Activated T-helper 2 cell treated with anti-CD3 and anti-CD28 coated beads, Interferon-gamma antibody, Interleukin-2, Interleukin-4, amounts not matched to agents 10 μg/mL and 5 μg/mL and 100 μg/mL, durations not matched to agents 14 hours and 24 hours and 36 hours (primary cell): ENCODE measurements at regions of chr3 and their contacts with region 1.

Region 1: DNA sequence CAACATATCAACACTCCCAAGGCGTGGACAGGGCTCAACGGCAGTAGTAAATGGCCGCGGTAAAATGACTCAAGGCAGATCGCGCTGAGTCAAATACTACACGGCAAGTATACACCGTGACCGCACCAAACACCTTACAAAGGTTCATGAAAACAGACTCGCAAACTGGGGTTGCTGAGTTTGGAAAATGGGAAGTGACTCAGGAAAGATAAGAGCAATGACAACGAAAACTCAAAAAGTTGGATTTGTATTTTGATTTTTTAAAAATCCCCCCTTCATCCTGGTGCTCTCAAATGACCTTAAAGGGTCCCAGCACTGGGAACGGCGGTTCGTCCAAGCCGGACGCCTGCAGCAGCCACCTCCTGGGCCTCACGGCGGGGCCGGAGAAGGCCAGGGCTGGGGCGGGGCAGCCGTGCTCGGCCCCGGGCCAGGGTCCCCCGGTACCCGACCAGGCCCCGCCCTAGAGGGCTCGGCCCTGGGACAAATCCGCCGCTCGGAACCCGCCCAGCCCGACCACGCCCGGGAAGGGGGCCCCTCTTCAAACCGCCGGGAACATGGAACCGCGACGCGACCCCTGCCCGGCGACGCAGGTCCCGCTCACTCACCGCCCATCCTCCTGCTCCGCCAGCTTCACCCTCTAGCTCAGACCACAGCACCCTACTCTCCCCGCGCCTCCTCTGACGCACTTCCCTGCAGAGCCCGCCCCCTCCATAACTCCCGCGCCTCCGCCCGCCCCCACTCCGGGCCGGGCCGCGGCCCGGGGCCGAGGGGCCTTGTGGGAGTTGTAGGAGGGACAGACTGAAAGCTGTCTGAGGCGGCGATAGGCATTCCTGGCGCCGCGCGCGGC is at the start of gene CLDND1:
- DNase-seq: peak; percentile 94
- H3K4me3 Mint-ChIP-seq: peak within 1 kb of the TSS; percentile 92
- H3K27ac Mint-ChIP-seq: peak within 1 kb of the TSS; percentile 95
- H3K4me1 Mint-ChIP-seq: peaks cover 65% of the 10 kb centered on the region
- H3K27me3 Mint-ChIP-seq: no peaks in the 10 kb centered on the region
- total RNA-seq, gene CLDND1: 326 and 338 TPM in 2 replicates

Region 2: GRCh38 chr3:97764407-97765238 is 757.8 kb before region 1 on chr3 and contains the start of gene ARL6:
- intact Hi-C with region 1: loop called (anchors 10 kb)
- DNase-seq: peak; percentile 69
- H3K4me3 Mint-ChIP-seq: peak within 1 kb of the TSS; percentile 89
- H3K27ac Mint-ChIP-seq: peak within 1 kb of the TSS; percentile 82
- H3K4me1 Mint-ChIP-seq: peaks cover 19% of the 10 kb centered on the region
- H3K27me3 Mint-ChIP-seq: peaks cover 3% of the 10 kb centered on the region
- total RNA-seq, gene ARL6: 3.2 and 3.9 TPM in 2 replicates

Region 3: DNA sequence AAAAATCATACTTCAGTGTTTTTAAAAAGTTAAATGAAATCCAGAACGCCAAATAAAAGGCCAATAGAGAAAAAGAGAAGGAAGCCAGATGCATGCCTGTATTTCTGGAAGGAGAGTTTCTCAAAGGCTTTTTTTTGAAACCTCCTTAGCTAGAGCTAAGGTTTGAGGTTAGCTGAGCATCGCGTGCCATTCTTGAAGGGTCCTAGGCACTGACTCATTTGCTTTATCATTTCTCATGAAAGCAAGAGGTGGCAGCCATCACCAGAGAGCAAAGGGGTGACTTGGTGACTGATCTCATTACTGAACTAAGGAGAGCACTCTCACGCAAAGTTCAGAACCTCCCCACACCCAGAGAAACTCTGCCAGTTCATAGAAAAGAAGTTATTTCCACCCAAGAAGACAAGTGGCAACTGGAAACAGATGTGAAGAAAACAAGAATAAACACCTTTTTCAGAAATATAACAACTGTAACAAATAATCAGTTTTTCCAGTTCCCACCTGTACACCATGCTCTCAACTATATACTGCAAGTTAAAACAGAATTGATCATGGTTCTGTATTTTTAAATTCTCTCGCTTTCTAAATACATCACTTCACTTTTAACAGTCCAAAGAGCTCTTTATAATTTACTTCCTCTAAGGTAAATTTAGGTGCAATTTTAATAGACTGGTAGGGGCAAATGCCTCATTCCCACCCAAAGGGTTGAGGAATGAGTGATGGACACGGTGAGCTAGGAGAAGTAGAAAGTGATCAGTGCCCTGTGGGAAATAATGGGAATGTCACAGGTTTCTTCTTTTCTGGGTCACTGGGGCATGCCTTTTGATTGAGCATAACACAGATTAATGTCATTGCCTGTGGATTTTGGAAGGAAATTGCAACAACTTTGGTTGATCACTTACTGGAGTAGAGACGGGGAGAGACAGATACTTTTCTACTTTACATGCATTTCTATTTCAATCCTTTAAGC is 34.0 kb after region 1 on chr3:
- intact Hi-C with region 1: loop called (anchors 1 kb)
- DNase-seq: peak; percentile 84
- H3K4me3 Mint-ChIP-seq: peak overlapping the region; percentile 77
- H3K27ac Mint-ChIP-seq: peak overlapping the region; percentile 93
- H3K4me1 Mint-ChIP-seq: peaks cover 75% of the 10 kb centered on the region
- H3K27me3 Mint-ChIP-seq: no peaks in the 10 kb centered on the region

Region 4: DNA sequence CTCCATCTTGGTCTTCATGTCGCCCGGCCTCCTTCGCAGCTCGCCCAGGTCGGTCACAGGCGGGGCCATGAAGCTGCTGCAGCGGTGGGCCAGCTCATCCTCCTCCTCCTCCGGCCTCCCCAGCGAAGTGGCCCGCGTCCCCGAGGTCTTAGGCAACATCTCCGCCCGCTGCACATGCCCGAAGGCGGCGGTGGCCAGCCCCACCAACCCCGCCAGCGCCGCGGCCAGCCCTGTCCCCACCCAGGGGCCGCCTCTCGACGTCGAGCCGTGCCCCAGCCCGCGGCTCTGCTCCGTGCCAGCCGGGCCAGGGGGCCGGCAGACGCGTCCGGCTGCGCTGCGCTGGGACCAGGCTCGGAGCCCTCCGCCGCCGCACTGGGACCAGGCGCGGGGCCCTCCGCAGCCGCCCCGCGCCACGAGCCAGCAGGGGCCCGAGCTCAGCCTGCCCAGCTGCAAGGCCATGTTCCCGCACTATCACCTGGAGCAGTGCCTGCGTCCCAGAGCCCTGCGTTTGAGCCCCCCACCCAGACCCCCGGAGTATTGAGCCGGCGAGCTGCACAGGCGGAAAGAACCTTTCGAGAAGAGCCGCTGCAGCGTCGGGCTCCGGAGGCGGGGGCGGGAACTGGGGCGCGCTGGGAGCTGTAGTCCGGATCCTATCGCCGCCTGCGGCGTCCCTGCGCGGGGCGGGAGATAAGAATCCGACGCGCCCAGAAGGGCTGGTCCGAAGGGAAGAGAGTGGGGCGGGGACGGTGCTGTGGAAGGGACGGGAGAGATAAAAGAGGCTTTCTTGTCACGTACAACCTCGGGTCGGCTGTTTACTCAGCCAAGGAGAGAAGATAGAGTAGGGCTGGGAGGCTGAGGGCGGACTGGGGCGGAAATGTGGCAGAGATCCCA is 70.8 kb after region 1 on chr3 and contains the start of gene CPOX:
- intact Hi-C with region 1: loop called (anchors 1 kb)
- DNase-seq: peak; percentile 87
- H3K4me3 Mint-ChIP-seq: peak within 1 kb of the TSS; percentile 92
- H3K27ac Mint-ChIP-seq: peak within 1 kb of the TSS; percentile 93
- H3K4me1 Mint-ChIP-seq: peaks cover 44% of the 10 kb centered on the region
- H3K27me3 Mint-ChIP-seq: no peaks in the 10 kb centered on the region
- total RNA-seq, gene CPOX: 48.4 and 50.4 TPM in 2 replicates

Region 5: DNA sequence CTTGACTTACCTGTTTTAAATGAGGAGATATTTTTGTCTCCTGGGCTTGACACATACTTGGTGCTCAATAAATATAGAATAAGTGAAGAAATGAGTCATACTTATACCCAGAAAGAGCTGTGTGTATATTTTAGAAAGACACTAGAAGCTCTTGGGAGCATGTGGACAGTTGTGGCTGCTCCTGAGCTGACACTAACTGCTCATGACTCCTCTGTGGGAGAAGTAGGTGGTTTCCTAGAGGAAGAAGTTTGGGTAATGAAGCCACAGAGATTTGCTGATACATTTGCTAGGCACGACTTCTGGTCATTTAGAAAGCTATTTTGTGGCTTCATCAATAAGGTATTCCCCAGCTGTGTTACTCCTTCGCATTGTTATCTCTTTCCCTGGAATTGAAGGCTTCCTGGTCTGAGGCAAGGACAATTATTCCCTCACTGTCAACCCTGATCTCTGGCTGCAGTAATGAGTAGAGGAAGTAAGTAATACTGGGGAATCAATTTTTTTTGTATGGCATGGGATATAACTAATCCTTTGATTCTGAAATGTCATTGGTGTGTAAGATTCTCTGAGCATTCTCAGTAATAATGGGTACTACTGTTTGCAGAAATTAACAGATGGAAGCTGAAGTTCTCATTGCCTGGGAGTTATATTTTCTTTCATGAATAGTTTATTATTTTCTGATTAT is 458.6 kb after region 1 on chr3:
- intact Hi-C with region 1: loop called (anchors 10 kb)
- DNase-seq: no peak
- H3K4me3 Mint-ChIP-seq: no peak overlapping the region
- H3K27ac Mint-ChIP-seq: no peak overlapping the region
- H3K4me1 Mint-ChIP-seq: peaks cover 21% of the 10 kb centered on the region
- H3K27me3 Mint-ChIP-seq: peaks cover 15% of the 10 kb centered on the region